ENCODE measurements at regions of chr15 and their contacts with region 1.

Region 1: GRCh38 chr15:73972984-73973682 is 19.0 kb downstream of the STOML1 start:
- DNase-seq: peak; percentile 89
- H3K4me3 ChIP-seq: no peak overlapping the region
- H3K27ac ChIP-seq: no peak overlapping the region
- H3K4me1 ChIP-seq: no peaks in the 10 kb centered on the region
- H3K27me3 ChIP-seq: no peaks in the 10 kb centered on the region
- CTCF ChIP-seq: peak; percentile 79

Region 2: GRCh38 chr15:74024687-74025086 is 51.6 kb after region 1 on chr15:
- intact Hi-C with region 1: no loop called
- DNase-seq: no peak
- H3K4me3 ChIP-seq: no peak overlapping the region
- H3K27ac ChIP-seq: no peak overlapping the region
- H3K4me1 ChIP-seq: no peaks in the 10 kb centered on the region
- H3K27me3 ChIP-seq: no peaks in the 10 kb centered on the region
- CTCF ChIP-seq: no peak

Region 3: DNA sequence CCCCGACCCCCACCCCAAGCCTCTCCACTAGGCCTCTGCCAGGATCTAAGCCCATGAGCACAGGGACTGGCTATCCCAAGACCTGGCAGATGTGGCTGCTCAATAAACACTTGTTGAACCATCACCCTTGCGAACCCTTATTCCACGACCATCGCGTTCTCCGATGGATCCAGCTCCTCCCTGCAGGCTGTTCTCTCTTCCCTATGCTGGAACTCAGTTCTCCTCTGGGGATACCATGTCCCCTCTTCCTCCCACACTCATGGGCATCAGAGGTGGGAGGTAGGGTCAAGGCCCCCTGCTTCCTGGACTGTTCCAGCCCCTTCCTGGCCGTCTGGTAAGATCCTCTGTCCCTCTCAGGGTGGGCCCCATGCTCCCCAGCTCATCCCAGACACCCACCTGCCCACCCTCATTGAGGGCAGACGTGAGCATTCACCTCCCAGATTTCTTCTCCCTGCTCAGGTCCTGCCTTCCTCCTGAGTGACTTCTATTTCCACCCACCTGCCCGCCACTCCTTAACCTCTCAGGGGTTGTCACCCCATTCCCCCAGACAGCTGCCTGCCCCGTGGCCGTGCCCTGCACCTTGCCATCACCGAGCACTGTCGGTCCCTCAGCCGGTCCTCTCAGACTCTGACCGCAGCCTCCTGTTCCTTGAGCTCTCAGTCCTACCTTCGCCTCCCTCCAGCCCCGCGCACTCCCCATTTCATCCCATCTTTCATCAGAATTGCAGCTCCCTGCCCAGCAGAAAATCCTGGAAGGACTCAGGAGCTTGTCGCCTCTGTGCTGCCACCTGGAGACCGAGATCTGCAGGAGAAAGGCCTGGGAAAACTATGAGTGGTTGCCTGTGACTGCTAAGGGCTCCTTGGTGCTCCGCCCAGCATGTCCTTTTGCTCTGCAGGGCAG is 63.4 kb after region 1 on chr15:
- intact Hi-C with region 1: loop called (anchors 2 kb)
- DNase-seq: peak; percentile 64
- H3K4me3 ChIP-seq: no peak overlapping the region
- H3K27ac ChIP-seq: no peak overlapping the region
- H3K4me1 ChIP-seq: no peaks in the 10 kb centered on the region
- H3K27me3 ChIP-seq: no peaks in the 10 kb centered on the region
- CTCF ChIP-seq: peak; percentile 26

Measured in colonic mucosa (tissue), 4 donors.